Heart right ventricle (tissue), 16 donors: ENCODE measurements at regions of chr9 and their contacts with region 1.

Region 1: GRCh38 chr9:81689343-81690190 is at the start of gene TLE1:
- DNase-seq: peak; percentile 99 to 100
- ATAC-seq: peak; percentile 95 to 99 (median 97)
- H3K4me3 ChIP-seq: peak within 1 kb of the TSS; percentile 69 to 87 (median 74)
- H3K27ac ChIP-seq: peak within 1 kb of the TSS; percentile 73 to 92 (median 84)
- H3K4me1 ChIP-seq: peaks cover 0 to 43% (median 26%) of the 10 kb centered on the region in 9 donors
- H3K27me3 ChIP-seq: peaks cover 0 to 51% (median 0%) of the 10 kb centered on the region in 7 donors
- CTCF ChIP-seq: peak in 2 of 9 donors; percentile 15 to 18
- total RNA-seq, gene TLE1: 7.9 to 12.7 (median 11.0) TPM

Region 2: DNA sequence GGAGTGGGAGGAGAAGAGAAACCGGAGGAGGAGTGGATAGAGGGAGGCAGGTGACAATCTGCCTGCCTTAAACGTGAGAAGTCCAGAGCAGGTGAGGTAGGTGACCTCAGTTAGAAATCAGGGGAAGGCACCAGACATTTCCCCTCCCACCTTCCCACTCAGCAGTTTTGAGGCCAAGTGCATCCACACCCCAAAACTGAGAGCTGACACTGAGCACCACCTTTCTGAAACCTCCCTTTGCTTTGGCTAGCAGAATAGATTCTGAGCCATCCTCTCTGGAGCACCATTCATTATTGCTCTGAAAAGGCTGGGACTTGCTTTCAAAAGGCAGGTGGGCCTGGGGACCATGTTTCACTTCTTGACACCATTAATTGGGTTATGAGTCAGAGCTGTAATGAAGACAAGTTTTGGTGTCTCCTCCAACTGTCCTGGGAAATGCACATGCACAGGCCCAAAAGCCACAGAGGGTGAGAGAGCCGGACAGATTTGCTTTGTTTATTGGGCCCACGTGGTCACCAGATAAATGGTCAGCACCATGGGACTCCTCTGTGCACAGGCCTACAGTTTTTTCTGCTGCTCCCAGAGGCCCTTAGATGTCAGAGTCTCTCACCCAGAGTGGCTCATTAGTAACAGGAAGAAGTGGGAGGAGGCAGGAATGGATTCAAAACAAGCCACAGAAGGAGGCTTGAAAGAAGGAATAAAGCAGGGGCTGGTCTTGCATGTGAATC is 314.9 kb before region 1 on chr9:
- intact Hi-C with region 1: loop called in 2 of 10 experiments (anchors 10 kb)
- DNase-seq: peak in 1 of 2 donors; percentile 38
- ATAC-seq: peak; percentile 44 to 69 (median 51)
- H3K4me3 ChIP-seq: no peak overlapping the region
- H3K27ac ChIP-seq: peak overlapping the region in 4 of 10 donors; percentile 55 to 67 (median 57)
- H3K4me1 ChIP-seq: peaks cover 0 to 48% (median 23%) of the 10 kb centered on the region in 9 donors
- H3K27me3 ChIP-seq: no peaks in the 10 kb centered on the region
- CTCF ChIP-seq: no peak

Region 3: GRCh38 chr9:81424431-81424830 is 265.1 kb before region 1 on chr9:
- intact Hi-C with region 1: no loop called
- DNase-seq: no peak
- ATAC-seq: peak in 1 of 8 donors; percentile 31
- H3K4me3 ChIP-seq: no peak overlapping the region
- H3K27ac ChIP-seq: no peak overlapping the region
- H3K4me1 ChIP-seq: no peaks in the 10 kb centered on the region
- H3K27me3 ChIP-seq: no peaks in the 10 kb centered on the region
- CTCF ChIP-seq: no peak

Region 4: DNA sequence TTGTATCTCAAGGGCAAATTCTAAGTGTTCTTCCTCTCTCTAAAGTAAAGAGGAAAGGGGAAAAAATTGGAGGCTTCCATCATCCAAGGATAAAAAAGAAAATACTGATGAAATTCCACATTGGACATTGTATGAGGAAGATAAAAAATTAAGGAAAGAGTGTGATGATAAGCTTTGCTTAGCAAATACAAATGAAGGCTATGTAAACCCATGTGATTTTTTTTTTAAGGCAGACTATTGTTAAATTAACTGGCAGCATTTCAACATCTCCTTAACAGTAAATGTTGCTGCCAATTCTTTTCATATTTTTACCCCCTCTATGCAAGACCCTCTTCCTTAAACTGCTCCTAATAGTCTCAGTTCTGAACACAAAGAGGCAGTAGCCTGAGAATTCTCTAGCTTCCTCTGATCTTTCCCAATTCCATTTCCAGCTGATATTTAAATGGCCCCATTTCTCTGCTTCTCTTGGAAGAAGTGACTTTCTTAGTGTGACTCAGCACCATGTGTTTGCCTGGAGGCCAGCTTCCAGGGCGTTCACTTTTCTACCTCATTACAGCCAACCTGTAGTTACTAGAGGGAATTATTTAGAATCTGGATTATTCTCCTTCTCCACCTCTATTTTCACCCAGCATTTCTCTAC is 159.9 kb before region 1 on chr9:
- intact Hi-C with region 1: loop called in 3 of 10 experiments (anchors 5 to 10 kb)
- DNase-seq: peak in 1 of 2 donors; percentile 12
- ATAC-seq: peak in 6 of 8 donors; percentile 69 to 82 (median 78)
- H3K4me3 ChIP-seq: no peak overlapping the region
- H3K27ac ChIP-seq: peak overlapping the region in 2 of 10 donors; percentile 6 to 46
- H3K4me1 ChIP-seq: peaks cover 0 to 22% (median 0%) of the 10 kb centered on the region in 9 donors
- H3K27me3 ChIP-seq: no peaks in the 10 kb centered on the region
- CTCF ChIP-seq: no peak

Region 5: DNA sequence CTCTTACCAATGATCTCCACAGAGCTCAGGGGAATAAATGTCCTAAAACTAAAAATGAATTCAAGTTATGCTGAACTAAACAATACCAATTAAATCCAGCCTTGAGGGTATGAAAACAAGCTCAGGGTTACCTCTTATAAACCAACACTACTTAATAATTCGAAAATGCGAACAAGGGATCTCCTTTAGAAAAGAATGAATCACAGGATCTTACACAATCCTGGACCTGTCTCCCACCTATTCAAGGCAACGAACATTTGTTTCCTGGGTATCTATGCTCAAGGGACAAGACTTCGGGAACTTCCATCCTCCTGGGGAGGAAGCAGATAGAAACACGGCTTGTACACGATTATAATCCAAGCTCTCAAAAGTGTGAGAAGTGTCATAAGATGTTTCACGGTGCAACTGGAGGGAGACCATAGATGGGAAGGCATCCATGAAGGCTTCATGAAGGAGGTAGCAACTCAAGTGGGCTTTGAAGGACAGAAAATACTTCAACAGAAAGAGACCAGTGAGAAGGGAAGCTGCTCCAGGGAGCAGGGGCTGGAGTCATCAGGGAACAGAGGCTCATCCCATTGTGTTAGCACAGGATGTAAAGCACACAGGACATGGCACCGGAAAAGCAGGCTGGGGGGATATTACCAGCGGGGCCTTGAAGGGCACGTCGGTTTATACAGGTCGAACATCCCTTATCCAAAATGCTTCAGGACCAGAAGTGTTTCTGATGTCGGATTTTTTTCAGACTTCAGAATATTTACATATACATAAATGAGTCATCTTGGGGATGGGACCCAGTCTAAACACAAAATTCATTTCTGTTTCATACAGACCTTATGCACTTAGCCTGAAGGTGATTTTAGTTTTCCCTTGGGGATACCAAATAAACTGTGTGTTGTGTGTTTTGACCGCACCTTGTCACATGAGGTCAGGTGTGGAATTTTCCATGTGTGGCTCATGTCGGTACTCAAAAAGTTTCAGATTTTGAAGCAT is 87.6 kb before region 1 on chr9:
- intact Hi-C with region 1: loop called in 5 of 10 experiments (anchors 5 to 10 kb)
- DNase-seq: no peak
- ATAC-seq: no peak
- H3K4me3 ChIP-seq: no peak overlapping the region
- H3K27ac ChIP-seq: peak overlapping the region in 6 of 10 donors; percentile 0 to 74 (median 30)
- H3K4me1 ChIP-seq: peaks cover 0 to 57% (median 24%) of the 10 kb centered on the region in 9 donors
- H3K27me3 ChIP-seq: no peaks in the 10 kb centered on the region
- CTCF ChIP-seq: no peak

Region 6: DNA sequence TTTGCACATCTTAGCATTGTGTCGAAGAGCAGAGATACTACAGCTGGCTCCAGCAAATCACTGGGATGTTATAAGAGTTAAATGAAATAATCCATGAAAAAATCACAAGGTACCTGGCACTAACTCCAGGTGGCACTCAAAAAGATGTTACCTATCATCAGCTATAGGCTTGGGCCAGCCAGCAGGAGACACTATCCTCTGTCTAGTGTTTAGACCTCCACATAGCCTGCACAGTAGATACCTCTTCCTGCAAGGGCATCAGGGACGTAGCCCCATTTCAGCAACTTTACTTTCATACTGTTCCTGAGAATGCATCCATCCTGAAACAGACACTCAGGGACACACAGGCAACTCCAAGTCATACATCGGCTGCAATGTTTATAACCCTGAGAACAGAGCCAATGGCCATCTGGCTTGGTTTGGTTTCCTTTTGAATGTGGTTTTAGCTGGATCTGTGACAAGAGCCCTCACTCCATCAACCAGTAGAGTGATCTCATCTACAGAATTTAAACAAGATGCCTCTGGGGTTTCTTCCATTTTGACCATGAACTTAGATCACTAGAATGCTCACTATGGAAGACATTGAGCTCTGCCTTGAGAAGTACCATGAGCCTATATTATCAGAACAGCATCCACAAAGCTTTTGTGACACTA is 70.1 kb before region 1 on chr9:
- intact Hi-C with region 1: loop called in 3 of 10 experiments (anchors 5 to 10 kb)
- DNase-seq: no peak
- ATAC-seq: no peak
- H3K4me3 ChIP-seq: no peak overlapping the region
- H3K27ac ChIP-seq: peak overlapping the region in 2 of 10 donors; percentile 23 to 29
- H3K4me1 ChIP-seq: peaks cover 0 to 33% (median 14%) of the 10 kb centered on the region in 9 donors
- H3K27me3 ChIP-seq: no peaks in the 10 kb centered on the region
- CTCF ChIP-seq: no peak

Region 7: DNA sequence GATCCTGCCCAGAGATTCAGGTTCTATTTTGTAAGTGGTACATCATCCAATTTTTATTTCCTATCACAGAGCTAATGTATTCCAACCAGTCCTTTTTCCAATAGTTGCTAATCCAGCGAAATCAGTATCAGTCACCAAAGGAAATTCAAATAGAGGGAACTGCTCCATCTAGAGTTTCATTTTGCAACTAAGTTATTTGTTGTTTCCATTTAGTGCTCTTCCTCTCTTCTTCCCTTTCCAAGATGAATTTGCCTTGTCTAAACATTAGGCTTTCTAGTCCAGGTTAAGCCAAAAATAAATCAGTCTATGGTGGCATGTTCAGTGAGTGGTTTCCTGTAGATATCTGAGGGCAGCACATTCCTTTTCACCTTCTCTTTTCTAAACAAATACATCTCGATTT is 158.9 kb after region 1 on chr9:
- intact Hi-C with region 1: loop called in 5 of 10 experiments (anchors 1 to 10 kb)
- DNase-seq: no peak
- ATAC-seq: peak in 1 of 8 donors; percentile 28
- H3K4me3 ChIP-seq: no peak overlapping the region
- H3K27ac ChIP-seq: no peak overlapping the region
- H3K4me1 ChIP-seq: peaks cover 0 to 33% (median 15%) of the 10 kb centered on the region in 9 donors
- H3K27me3 ChIP-seq: peaks cover 0 to 7% (median 0%) of the 10 kb centered on the region in 7 donors
- CTCF ChIP-seq: peak in 7 of 9 donors; percentile 31 to 67 (median 53)

Region 8: DNA sequence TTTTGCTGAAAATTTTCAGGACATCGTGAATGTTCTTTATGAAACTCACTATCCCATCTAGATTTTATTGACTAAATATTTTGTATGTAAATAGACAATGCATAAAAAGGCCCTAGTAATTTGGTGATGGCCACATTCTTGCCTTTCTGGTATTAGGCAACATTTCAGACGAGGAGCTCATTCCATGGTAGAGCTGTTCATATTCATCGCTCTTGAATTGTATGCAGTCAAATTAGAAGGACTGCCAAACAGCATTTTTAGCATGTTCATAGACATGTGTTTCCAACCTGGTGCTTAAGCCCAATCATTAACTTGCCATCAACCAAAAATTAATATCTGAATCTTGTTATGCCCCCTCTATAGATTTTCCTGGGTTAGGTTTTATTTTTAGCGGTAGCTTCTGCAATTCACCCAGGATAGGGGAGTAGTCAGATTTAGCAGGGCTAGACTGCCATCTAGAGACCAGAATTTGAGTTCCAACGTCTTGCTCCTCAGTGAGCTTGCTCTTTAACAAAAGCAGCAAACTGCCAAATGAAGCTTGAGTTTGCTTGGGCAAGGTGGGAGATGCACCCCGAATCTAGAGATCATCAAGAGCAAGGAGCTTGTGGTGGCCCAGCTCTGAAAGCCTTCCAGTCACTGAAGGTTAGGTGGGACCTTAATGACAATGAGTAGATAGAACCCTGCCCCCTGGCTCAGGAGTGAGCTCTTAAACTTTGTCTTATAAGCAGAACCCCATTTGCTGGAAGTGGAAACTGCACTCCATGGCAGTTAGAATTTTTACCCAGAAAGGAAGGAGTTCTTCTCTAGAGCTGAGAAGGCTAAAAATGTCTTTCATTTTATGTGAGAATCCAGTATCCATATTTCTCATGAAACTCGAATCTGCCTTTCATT is 917.2 kb after region 1 on chr9:
- intact Hi-C with region 1: loop called in 1 of 10 experiments (anchors 5 kb)
- DNase-seq: peak in 1 of 2 donors; percentile 57
- ATAC-seq: peak in 7 of 8 donors; percentile 78 to 89 (median 83)
- H3K4me3 ChIP-seq: no peak overlapping the region
- H3K27ac ChIP-seq: no peak overlapping the region
- H3K4me1 ChIP-seq: peaks cover 0 to 26% (median 9%) of the 10 kb centered on the region in 9 donors
- H3K27me3 ChIP-seq: peaks cover 0 to 27% (median 5%) of the 10 kb centered on the region in 7 donors
- CTCF ChIP-seq: peak; percentile 32 to 80 (median 70)